GM12878 (cell line): ENCODE measurements at regions of chr10 and their contacts with region 1.

Region 1: DNA sequence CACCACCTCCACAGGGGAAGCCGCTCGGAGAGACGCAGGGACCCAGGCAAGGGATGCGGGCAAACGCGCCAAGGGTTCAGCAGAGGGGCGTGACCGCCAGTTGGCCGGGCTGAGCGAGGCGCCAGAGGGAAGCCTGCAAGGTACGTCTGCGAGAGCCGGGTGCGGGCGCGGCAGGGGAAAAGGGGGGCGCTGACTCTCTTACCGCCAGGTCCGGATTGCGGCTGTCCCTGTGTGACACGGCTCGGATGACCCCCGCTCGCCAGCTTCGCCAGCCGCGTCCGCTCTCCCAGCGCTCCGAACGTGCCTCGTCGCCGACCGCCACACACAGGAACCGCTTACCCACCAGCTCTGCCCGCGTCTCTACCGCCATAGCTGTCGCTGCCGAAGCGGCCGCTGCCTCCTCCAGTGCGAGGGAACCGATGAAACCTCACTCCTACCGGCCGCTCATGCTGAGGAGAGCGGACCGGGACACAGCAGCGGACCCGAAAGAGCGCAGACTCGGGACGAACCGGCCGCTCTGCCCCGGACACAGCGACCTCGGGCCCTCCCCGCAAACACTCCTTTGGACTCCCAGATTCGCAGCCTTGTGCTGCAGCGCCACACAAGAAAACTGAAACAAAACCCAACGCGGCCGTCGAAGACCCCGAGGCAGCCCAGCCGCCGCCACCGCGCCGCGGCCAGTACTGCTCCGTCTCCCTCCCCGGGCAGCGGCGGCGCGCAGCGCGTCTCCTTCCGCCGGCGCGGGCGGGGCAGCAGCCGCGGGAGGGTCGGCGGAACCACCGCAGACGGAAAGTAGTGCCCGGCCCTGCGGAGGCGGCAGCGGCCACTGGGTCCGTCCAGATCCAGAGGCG is at the start of gene JMJD1C:
- DNase-seq: no peak
- ATAC-seq: peak; percentile 85
- H3K4me3 ChIP-seq: peak within 1 kb of the TSS; percentile 87
- H3K27ac ChIP-seq: peak within 1 kb of the TSS; percentile 77
- H3K4me1 ChIP-seq: peaks cover 3% of the 10 kb centered on the region; the same call in 1 of the 2 replicates
- H3K27me3 ChIP-seq: no peaks in the 10 kb centered on the region
- CTCF ChIP-seq: 0 out of 6 replicates have a peak, but pooled peaks of 1 of the 3 experiments have one; percentile 9
- EP300 ChIP-seq: no peak
- POLR2A ChIP-seq: peak; percentile 91
- RAD21 ChIP-seq: 0 out of 2 replicates have a peak, but pooled peaks have one; percentile 20
- polyA plus RNA-seq, gene JMJD1C: 31.2 to 42.6 TPM

Region 2: GRCh38 chr10:63286754-63287264 is 178.7 kb before region 1 on chr10:
- CTCF ChIA-PET with region 1: interaction called, 5 read pairs
- POLR2A ChIA-PET with region 1: no interaction called
- RAD21 ChIA-PET with region 1: interaction called, 3 read pairs
- SMC1A ChIA-PET with region 1: interaction called, 5 read pairs
- in situ Hi-C with region 1: no loop called
- intact Hi-C with region 1: loop called (anchors 5 kb)
- DNase-seq: peak; percentile 66
- ATAC-seq: peak; percentile 83
- H3K4me3 ChIP-seq: peak overlapping the region; percentile 19; the same call in 1 of the 2 replicates
- H3K27ac ChIP-seq: peak overlapping the region; percentile 73
- H3K4me1 ChIP-seq: peaks cover 32% of the 10 kb centered on the region
- H3K27me3 ChIP-seq: no peaks in the 10 kb centered on the region
- CTCF ChIP-seq: no peak
- EP300 ChIP-seq: peak; percentile 24 to 69; a peak in 1 of 4 replicates
- POLR2A ChIP-seq: no peak
- RAD21 ChIP-seq: no peak

Region 3: GRCh38 chr10:63355682-63356081 is 109.8 kb before region 1 on chr10:
- CTCF ChIA-PET with region 1: interaction called, 3 read pairs
- POLR2A ChIA-PET with region 1: no interaction called
- RAD21 ChIA-PET with region 1: no interaction called
- SMC1A ChIA-PET with region 1: no interaction called
- in situ Hi-C with region 1: no loop called
- intact Hi-C with region 1: loop called (anchors 5 kb)
- DNase-seq: no peak
- ATAC-seq: peak; percentile 64
- H3K4me3 ChIP-seq: no peak overlapping the region
- H3K27ac ChIP-seq: peak overlapping the region; percentile 51
- H3K4me1 ChIP-seq: peaks cover 13% of the 10 kb centered on the region
- H3K27me3 ChIP-seq: no peaks in the 10 kb centered on the region
- CTCF ChIP-seq: no peak
- EP300 ChIP-seq: no peak
- POLR2A ChIP-seq: no peak
- RAD21 ChIP-seq: no peak

Region 4: GRCh38 chr10:63521416-63522276 is 56.1 kb after region 1 on chr10:
- CTCF ChIA-PET with region 1: no interaction called
- POLR2A ChIA-PET with region 1: interaction called, 3 read pairs
- RAD21 ChIA-PET with region 1: interaction called, 7 read pairs
- SMC1A ChIA-PET with region 1: interaction called, 7 read pairs
- in situ Hi-C with region 1: no loop called
- intact Hi-C with region 1: loop called (anchors 2 kb)
- DNase-seq: no peak
- ATAC-seq: peak; percentile 71
- H3K4me3 ChIP-seq: peak overlapping the region; percentile 89
- H3K27ac ChIP-seq: peak overlapping the region; percentile 92
- H3K4me1 ChIP-seq: peaks cover 12% of the 10 kb centered on the region; the same call in 1 of the 2 replicates
- H3K27me3 ChIP-seq: no peaks in the 10 kb centered on the region
- CTCF ChIP-seq: no peak
- EP300 ChIP-seq: no peak
- POLR2A ChIP-seq: peak; percentile 69
- RAD21 ChIP-seq: 0 out of 2 replicates have a peak, but pooled peaks have one; percentile 4